Activated naive CD4-positive, alpha-beta T cell treated with anti-CD3 and anti-CD28 coated beads for 36 hours (primary cell): ENCODE measurements at regions of chr17 and their contacts with region 1.

Region 1: DNA sequence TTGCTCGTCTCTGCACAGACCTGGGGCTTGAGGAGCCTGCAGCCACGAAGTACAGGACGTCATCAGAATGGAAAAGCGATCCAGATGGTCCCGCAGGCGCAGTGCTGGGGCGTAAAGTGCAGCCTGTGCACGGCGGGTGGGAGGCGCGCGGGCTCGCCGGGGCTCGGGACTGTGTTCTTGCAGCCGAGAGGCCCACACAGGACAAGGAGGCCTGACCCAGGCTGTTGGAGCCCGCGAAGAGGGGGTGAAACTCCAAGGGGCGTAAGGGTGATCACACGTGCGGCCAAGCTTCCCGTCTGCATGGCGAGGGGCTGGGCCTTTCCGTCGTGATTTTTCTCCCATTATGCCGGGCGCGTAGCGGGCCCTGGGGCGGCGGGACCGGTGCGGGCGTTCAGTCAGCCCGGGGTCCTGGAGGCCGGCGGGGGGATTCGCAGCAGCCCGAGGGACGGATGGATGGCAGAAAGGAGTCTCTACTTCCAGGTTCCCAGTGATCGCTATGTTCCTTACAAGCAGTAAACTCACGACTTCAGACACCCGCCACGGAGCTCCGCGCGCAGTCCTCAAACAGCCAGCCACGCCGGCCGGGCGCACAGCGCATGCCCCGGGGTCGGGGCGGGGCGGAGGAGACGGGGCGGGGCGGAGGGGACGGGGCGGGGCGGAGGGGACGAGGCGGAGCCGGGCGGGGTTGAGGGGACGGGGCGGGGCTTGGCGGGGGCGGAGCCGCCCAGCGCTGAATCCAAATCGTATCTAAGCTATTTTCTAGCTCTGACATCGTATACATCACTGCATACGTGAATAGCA is 141.0 kb upstream of the KCNJ18 start:
- DNase-seq: peak; percentile 79
- H3K4me3 Mint-ChIP-seq: peak overlapping the region; percentile 91
- H3K27ac Mint-ChIP-seq: peak overlapping the region; percentile 88
- H3K4me1 Mint-ChIP-seq: peaks cover 29% of the 10 kb centered on the region
- H3K27me3 Mint-ChIP-seq: peaks cover 11% of the 10 kb centered on the region

Region 2: DNA sequence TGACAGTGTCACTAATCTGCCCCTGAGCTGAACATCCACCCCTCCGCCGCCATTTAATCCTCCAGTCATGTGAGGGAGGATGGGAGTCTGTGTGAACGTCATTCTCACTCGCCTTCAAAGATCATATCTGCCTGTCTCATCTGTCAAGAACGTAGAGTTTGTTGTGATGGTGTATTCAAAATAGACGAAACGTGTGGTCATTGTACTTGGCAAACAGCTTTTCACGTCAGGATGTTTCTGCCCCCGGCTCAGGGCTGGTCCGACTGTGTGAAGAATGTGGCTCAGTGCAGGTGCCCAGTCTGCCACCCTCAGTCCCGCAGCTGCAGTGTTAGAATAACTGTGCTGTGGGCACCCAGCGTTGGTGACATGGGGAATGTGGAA is 27.1 kb before region 1 on chr17:
- CTCF ChIA-PET with region 1: no interaction called
- intact Hi-C with region 1: no loop called
- DNase-seq: no peak
- H3K4me3 Mint-ChIP-seq: no peak overlapping the region
- H3K27ac Mint-ChIP-seq: no peak overlapping the region
- H3K4me1 Mint-ChIP-seq: no peaks in the 10 kb centered on the region
- H3K27me3 Mint-ChIP-seq: no peaks in the 10 kb centered on the region

Region 3: DNA sequence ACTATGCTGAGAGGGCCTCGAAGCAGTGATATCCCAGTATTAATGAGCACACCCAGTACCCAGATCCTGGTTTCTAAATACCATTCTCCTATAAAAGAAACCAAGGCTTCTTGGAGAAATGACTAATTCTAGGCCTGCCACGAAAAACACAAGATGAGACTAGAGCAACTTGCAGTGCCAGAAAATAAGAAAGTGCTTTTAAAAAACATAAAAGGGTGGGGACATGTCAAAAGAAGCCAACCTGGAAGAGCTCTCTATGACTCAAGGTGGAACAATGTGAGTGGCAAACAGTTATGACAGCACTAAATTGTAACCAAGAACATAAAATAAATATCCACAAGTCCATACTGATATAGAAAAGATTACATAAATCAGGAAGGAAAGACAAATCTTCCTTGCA is 12.1 kb before region 1 on chr17:
- CTCF ChIA-PET with region 1: interaction called, 5 read pairs
- intact Hi-C with region 1: loop called (anchors 1 kb)
- DNase-seq: no peak
- H3K4me3 Mint-ChIP-seq: no peak overlapping the region
- H3K27ac Mint-ChIP-seq: peak overlapping the region; percentile 69
- H3K4me1 Mint-ChIP-seq: peaks cover 33% of the 10 kb centered on the region
- H3K27me3 Mint-ChIP-seq: no peaks in the 10 kb centered on the region

Region 4: DNA sequence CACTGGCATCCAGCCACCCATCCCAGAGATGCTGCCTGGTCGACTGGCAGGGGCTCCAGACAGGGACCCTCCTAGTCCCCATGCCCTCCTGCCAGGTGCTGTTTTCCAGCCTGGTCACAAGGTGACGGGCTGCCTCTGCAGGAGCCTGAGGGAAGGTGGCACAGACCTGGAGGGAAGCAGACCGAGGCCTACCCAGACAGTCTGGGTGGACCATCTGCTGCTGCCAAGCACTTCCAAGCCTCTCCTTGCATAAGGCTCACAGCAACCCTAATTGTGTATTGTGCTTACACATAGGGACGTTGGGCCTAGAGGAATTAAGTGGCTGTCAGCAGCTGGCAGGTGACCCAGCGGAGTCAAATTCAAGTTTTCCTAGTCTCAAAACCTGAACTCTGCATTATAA is 50.9 kb after region 1 on chr17:
- CTCF ChIA-PET with region 1: no interaction called
- intact Hi-C with region 1: no loop called
- DNase-seq: no peak
- H3K4me3 Mint-ChIP-seq: no peak overlapping the region
- H3K27ac Mint-ChIP-seq: no peak overlapping the region
- H3K4me1 Mint-ChIP-seq: no peaks in the 10 kb centered on the region
- H3K27me3 Mint-ChIP-seq: peaks cover 15% of the 10 kb centered on the region